Natural killer cell (primary cell): ENCODE measurements at regions of chr11 and their contacts with region 1.

Region 1: GRCh38 chr11:108222686-108223448 is at the start of gene ATM:
- DNase-seq: peak; percentile 98 to 100
- ATAC-seq: peak; percentile 76 to 94 (median 85)
- H3K4me3 ChIP-seq: peak within 1 kb of the TSS; percentile 65
- H3K4me3 Mint-ChIP-seq: no peak within 1 kb of the TSS
- H3K27ac ChIP-seq: peak within 1 kb of the TSS; percentile 88
- H3K27ac Mint-ChIP-seq: no peak within 1 kb of the TSS
- H3K4me1 ChIP-seq: peaks cover 11% of the 10 kb centered on the region
- H3K4me1 Mint-ChIP-seq: peaks cover 61 to 64% of the 10 kb centered on the region in 2 donors
- H3K27me3 ChIP-seq: no peaks in the 10 kb centered on the region
- H3K27me3 Mint-ChIP-seq: no peaks in the 10 kb centered on the region
- CTCF ChIP-seq: peak; percentile 64
- total RNA-seq, gene ATM: 502 to 568 (median 539) TPM

Region 2: GRCh38 chr11:107457558-107458271 is 765.2 kb before region 1 on chr11 and contains the start of gene CWF19L2:
- intact Hi-C with region 1: loop called (anchors 10 kb)
- DNase-seq: peak; percentile 76 to 96
- ATAC-seq: peak; percentile 96 to 99 (median 97)
- H3K4me3 ChIP-seq: peak within 1 kb of the TSS; percentile 93
- H3K4me3 Mint-ChIP-seq: peak within 1 kb of the TSS; percentile 99
- H3K27ac ChIP-seq: peak within 1 kb of the TSS; percentile 84
- H3K27ac Mint-ChIP-seq: peak within 1 kb of the TSS; percentile 91 to 95
- H3K4me1 ChIP-seq: peaks cover 4% of the 10 kb centered on the region
- H3K4me1 Mint-ChIP-seq: peaks cover 24 to 28% of the 10 kb centered on the region in 2 donors
- H3K27me3 ChIP-seq: no peaks in the 10 kb centered on the region
- H3K27me3 Mint-ChIP-seq: peaks cover 17 to 20% of the 10 kb centered on the region in 2 donors
- CTCF ChIP-seq: no peak
- total RNA-seq, gene CWF19L2: 25.8 to 34.8 (median 28.0) TPM

Region 3: GRCh38 chr11:108235633-108236032 is 12.8 kb after region 1 on chr11:
- intact Hi-C with region 1: loop called (anchors 1 kb)
- DNase-seq: peak in 1 of 2 donors; percentile 31
- ATAC-seq: peak; percentile 36 to 62 (median 41)
- H3K4me3 ChIP-seq: no peak overlapping the region
- H3K4me3 Mint-ChIP-seq: peak overlapping the region; percentile 92
- H3K27ac ChIP-seq: peak overlapping the region; percentile 94
- H3K27ac Mint-ChIP-seq: peak overlapping the region in 1 of 2 donors; percentile 95
- H3K4me1 ChIP-seq: peaks cover 67% of the 10 kb centered on the region
- H3K4me1 Mint-ChIP-seq: peaks cover 65 to 72% of the 10 kb centered on the region in 2 donors
- H3K27me3 ChIP-seq: no peaks in the 10 kb centered on the region
- H3K27me3 Mint-ChIP-seq: no peaks in the 10 kb centered on the region
- CTCF ChIP-seq: no peak

Region 4: DNA sequence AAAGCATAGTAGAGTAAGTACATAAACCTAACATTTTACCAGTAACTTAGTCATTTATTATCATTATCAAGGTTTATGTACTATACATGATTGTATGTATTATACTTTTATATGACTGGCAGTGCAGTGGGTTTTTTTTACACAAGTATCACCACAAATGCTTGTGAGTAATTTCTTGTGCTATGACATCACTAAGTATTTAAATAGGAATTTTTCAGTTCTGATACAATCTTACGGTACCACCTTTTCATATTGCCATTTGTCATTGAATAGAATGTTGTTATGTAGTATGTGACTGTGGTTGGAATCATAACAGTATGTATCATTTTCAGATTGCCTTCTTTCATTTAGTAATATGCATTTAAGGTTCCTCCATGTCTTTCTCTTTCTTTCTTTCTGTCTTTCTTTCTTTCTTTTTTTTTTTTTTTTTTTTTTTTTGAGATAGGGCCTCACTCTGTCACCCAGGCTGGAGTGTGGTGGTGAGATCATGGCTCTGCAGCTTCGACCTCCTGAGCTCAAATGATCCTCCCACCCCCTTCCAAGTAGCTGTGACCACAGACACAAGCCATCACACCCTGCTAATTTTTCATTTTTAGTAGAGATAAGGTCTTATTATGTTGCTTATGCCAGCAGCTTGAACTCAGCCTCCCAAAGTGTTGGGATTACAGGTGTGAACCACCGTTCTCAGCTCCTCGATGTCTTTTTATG is 18.6 kb after region 1 on chr11:
- intact Hi-C with region 1: loop called (anchors 1 kb)
- DNase-seq: peak in 1 of 2 donors; percentile 56
- ATAC-seq: peak; percentile 48 to 63 (median 62)
- H3K4me3 ChIP-seq: no peak overlapping the region
- H3K4me3 Mint-ChIP-seq: peak overlapping the region; percentile 86
- H3K27ac ChIP-seq: peak overlapping the region; percentile 82
- H3K27ac Mint-ChIP-seq: peak overlapping the region in 1 of 2 donors; percentile 95
- H3K4me1 ChIP-seq: peaks cover 50% of the 10 kb centered on the region
- H3K4me1 Mint-ChIP-seq: peaks cover 67 to 74% of the 10 kb centered on the region in 2 donors
- H3K27me3 ChIP-seq: no peaks in the 10 kb centered on the region
- H3K27me3 Mint-ChIP-seq: no peaks in the 10 kb centered on the region
- CTCF ChIP-seq: no peak